ENCODE measurements at regions of chr17 and their contacts with region 1.

Region 1: GRCh38 chr17:43673516-43674323 is 12.0 kb upstream of the MEOX1 start:
- DNase-seq: peak; percentile 50 to 75 (median 61)
- H3K4me3 ChIP-seq: no peak overlapping the region
- H3K4me3 Mint-ChIP-seq: no peak overlapping the region
- H3K27ac ChIP-seq: no peak overlapping the region
- H3K27ac Mint-ChIP-seq: no peak overlapping the region
- H3K4me1 ChIP-seq: peaks cover 3% of the 10 kb centered on the region
- H3K4me1 Mint-ChIP-seq: peaks cover 9 to 16% (median 12%) of the 10 kb centered on the region in 3 donors
- H3K27me3 ChIP-seq: no peaks in the 10 kb centered on the region
- H3K27me3 Mint-ChIP-seq: peaks cover 2 to 6% of the 10 kb centered on the region in 2 donors

Region 2: DNA sequence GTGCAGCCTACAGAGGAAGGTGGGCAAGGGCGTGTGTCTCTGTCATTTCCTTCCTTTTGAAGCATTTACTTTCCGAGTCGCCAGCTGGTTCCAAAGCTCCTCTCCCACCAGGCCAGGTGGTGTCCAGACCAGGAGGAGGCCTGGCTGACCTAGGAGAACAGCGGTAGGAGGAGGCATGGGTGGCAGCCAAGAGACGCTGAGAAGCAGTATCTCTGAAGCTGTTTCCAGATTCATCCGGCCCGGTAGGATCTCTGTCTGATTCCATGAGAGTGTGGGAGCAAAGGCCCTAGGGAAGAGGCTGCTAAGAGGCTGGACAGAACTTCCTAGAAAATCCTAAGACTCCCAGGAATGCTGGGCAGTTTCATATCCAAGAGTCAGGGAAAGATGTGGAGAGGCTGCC is 32.3 kb before region 1 on chr17:
- CTCF ChIA-PET with region 1: no interaction called
- POLR2A ChIA-PET with region 1: no interaction called
- DNase-seq: no peak
- H3K4me3 ChIP-seq: no peak overlapping the region
- H3K4me3 Mint-ChIP-seq: peak overlapping the region in 6 of 7 donors; percentile 27 to 80 (median 58)
- H3K27ac ChIP-seq: no peak overlapping the region
- H3K27ac Mint-ChIP-seq: peak overlapping the region in 6 of 8 donors; percentile 32 to 86 (median 46)
- H3K4me1 ChIP-seq: peaks cover 4% of the 10 kb centered on the region
- H3K4me1 Mint-ChIP-seq: peaks cover 4 to 25% (median 13%) of the 10 kb centered on the region in 3 donors
- H3K27me3 ChIP-seq: no peaks in the 10 kb centered on the region
- H3K27me3 Mint-ChIP-seq: peaks cover 6 to 10% of the 10 kb centered on the region in 2 donors

Region 3: DNA sequence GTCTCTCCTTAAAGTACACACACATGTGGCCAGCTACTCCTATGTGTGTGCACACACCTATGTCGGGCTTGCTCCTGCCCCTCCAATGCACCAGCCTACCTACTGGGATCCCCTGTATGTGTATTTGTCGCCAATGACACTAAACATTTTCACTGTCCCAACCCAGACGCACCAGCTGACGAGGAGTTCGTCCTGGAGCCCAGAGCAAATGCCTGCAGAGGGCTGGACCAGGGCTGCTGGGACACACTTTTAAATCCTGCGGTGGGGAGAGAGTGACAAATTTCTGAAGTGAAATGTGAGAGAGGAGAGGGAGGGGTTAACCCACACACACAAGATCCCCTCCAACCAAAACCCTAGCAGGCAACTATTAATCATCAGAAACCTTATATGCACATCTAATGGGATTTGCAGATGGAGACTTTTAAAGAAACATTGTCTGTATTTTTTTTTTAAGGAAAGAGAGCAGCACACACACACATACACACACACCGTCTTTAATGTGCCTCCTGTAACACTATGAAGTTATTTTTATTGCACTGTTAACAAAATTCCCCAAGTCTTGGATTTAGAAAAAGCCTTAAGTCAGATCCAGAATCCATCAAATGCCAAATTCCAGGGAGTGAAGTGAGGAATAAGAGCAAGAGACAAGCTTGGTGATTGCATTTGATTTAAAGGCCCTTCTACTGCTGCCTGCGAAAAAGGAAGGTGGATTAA is 11.9 kb before region 1 on chr17 and contains the start of gene MEOX1:
- CTCF ChIA-PET with region 1: interaction called, 13 read pairs
- POLR2A ChIA-PET with region 1: interaction called, 3 read pairs
- DNase-seq: no peak
- H3K4me3 ChIP-seq: peak within 1 kb of the TSS; percentile 39
- H3K4me3 Mint-ChIP-seq: peak within 1 kb of the TSS; percentile 30 to 87 (median 75)
- H3K27ac ChIP-seq: no peak within 1 kb of the TSS
- H3K27ac Mint-ChIP-seq: peak within 1 kb of the TSS; percentile 52 to 87 (median 72)
- H3K4me1 ChIP-seq: peaks cover 39% of the 10 kb centered on the region
- H3K4me1 Mint-ChIP-seq: peaks cover 25 to 60% (median 46%) of the 10 kb centered on the region in 3 donors
- H3K27me3 ChIP-seq: no peaks in the 10 kb centered on the region
- H3K27me3 Mint-ChIP-seq: peaks cover 0 to 2% of the 10 kb centered on the region in 2 donors
- total RNA-seq, gene MEOX1: 0.86 to 1.2 TPM

Region 4: GRCh38 chr17:43734376-43734775 is 60.7 kb after region 1 on chr17:
- CTCF ChIA-PET with region 1: no interaction called
- POLR2A ChIA-PET with region 1: no interaction called
- DNase-seq: no peak
- H3K4me3 ChIP-seq: no peak overlapping the region
- H3K4me3 Mint-ChIP-seq: no peak overlapping the region
- H3K27ac ChIP-seq: no peak overlapping the region
- H3K27ac Mint-ChIP-seq: no peak overlapping the region
- H3K4me1 ChIP-seq: no peaks in the 10 kb centered on the region
- H3K4me1 Mint-ChIP-seq: no peaks in the 10 kb centered on the region
- H3K27me3 ChIP-seq: no peaks in the 10 kb centered on the region
- H3K27me3 Mint-ChIP-seq: peaks cover 4 to 27% of the 10 kb centered on the region in 2 donors

Region 5: DNA sequence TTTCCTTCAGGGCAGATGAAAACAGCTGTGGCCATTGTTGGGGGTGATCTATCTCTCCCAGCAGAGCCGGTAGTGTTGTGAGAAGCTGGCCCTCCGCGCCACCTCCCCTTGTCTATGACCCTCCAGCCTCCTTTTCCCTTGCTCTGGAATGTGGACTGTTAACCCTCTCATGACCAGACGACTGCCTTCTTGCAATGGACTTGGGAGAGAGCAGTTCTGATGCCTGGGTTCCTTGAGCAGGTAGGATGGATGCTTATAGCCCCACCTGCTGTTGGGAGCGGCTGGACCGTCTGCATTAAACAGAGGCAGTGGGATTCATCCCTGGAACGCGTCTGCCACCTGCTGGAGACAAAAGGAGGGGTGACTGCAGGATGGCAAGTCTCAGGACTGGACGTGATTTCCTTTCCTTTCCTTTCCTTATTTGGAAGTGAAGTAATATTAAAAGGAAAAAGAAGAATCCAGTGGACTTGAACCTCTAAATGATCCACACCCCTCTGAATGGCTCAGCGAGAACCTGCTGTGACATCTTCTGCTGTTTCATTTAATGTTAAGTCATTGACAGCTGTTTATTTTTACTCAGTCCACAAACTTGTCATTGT is 86.6 kb after region 1 on chr17:
- CTCF ChIA-PET with region 1: interaction called, 10 read pairs
- POLR2A ChIA-PET with region 1: no interaction called
- DNase-seq: peak; percentile 75 to 91 (median 79)
- H3K4me3 ChIP-seq: no peak overlapping the region
- H3K4me3 Mint-ChIP-seq: no peak overlapping the region
- H3K27ac ChIP-seq: no peak overlapping the region
- H3K27ac Mint-ChIP-seq: peak overlapping the region in 1 of 8 donors; percentile 40
- H3K4me1 ChIP-seq: no peaks in the 10 kb centered on the region
- H3K4me1 Mint-ChIP-seq: peaks cover 0 to 5% (median 5%) of the 10 kb centered on the region in 3 donors
- H3K27me3 ChIP-seq: no peaks in the 10 kb centered on the region
- H3K27me3 Mint-ChIP-seq: peaks cover 15 to 39% of the 10 kb centered on the region in 2 donors